A549 (cell line): ENCODE measurements at regions of chr5 and their contacts with region 1.

Region 1: DNA sequence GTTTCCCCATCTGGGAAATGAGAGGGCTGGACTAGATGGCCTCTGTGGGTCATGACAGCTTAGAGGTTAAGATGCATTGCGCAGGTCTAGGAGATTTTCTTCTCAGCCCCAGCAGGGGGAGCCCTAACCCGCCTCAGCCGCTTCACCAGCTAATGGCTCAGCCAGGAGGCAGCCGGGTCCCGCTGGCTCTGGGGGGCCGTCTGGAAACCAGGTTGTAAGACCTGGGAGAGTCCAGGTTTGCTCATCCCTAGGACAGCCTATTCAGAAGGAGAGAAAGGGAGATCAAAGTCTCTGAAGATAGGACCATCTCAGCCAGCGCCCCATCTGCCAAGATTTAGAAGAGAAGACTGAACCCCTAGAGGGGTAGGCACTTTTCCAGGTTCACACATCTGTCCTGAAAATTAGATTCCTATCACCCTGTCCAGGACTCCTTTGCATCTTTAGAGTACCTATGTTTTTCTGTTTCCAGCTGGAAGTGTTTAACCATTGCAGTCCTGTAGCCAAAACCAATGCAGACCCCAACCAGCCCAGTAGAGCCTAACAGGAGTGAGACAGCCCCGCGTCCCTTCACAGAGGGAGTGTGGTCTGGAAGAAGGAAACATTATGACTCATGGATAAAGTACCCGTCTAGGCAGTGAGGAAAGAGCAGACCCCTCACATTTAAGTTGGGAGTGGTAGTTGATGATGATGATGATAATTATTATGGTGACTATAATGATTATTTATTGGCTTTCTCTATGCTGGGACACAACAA is 27.5 kb downstream of the SPARC start:
- DNase-seq: peak; percentile 79 to 83
- ATAC-seq: peak; percentile 97 to 98
- H3K4me3 ChIP-seq: no peak overlapping the region
- H3K27ac ChIP-seq: peak overlapping the region; percentile 45 to 81; a peak in 5 of 6 replicates
- H3K4me1 ChIP-seq: peaks cover 5% of the 10 kb centered on the region; the same call in 1 of the 3 replicates
- CTCF ChIP-seq: peak; percentile 93
- EP300 ChIP-seq: no peak
- POLR2A ChIP-seq: no peak
- RAD21 ChIP-seq: peak; percentile 98

Region 2: GRCh38 chr5:151447174-151448037 is 211.8 kb before region 1 on chr5 and contains the start of gene SLC36A1:
- CTCF ChIA-PET with region 1: interaction called, 83 read pairs
- POLR2A ChIA-PET with region 1: no interaction called
- DNase-seq: peak; percentile 89 to 90
- ATAC-seq: peak; percentile 85 to 95
- H3K4me3 ChIP-seq: peak within 1 kb of the TSS; percentile 75
- H3K27ac ChIP-seq: peak within 1 kb of the TSS; percentile 72 to 89
- H3K4me1 ChIP-seq: peaks cover 16% of the 10 kb centered on the region
- CTCF ChIP-seq: peak; percentile 92
- EP300 ChIP-seq: no peak
- POLR2A ChIP-seq: peak; percentile 49; the same call in 1 of the 2 replicates
- RAD21 ChIP-seq: peak; percentile 74 to 86
- polyA plus RNA-seq, gene SLC36A1: 10.8 and 12.4 TPM in 2 replicates

Region 3: GRCh38 chr5:151675611-151676313 is 16.6 kb after region 1 on chr5:
- CTCF ChIA-PET with region 1: interaction called, 59 read pairs
- POLR2A ChIA-PET with region 1: no interaction called
- DNase-seq: no peak
- ATAC-seq: no peak
- H3K4me3 ChIP-seq: no peak overlapping the region
- H3K27ac ChIP-seq: peak overlapping the region in 1 of 2 experiments; percentile 11; a peak in 2 of 6 replicates
- H3K4me1 ChIP-seq: peaks cover 20% of the 10 kb centered on the region
- CTCF ChIP-seq: no peak
- EP300 ChIP-seq: no peak
- POLR2A ChIP-seq: no peak
- RAD21 ChIP-seq: no peak

Region 4: GRCh38 chr5:151699071-151699901 is 40.1 kb after region 1 on chr5:
- CTCF ChIA-PET with region 1: interaction called, 39 read pairs
- POLR2A ChIA-PET with region 1: interaction called, 5 read pairs
- DNase-seq: peak; percentile 61 to 77
- ATAC-seq: peak; percentile 93 to 95
- H3K4me3 ChIP-seq: no peak overlapping the region
- H3K27ac ChIP-seq: peak overlapping the region; percentile 71 to 93
- H3K4me1 ChIP-seq: peaks cover 48% of the 10 kb centered on the region
- CTCF ChIP-seq: no peak
- EP300 ChIP-seq: no peak
- POLR2A ChIP-seq: no peak
- RAD21 ChIP-seq: 0 out of 5 replicates have a peak, but pooled peaks of 1 of the 2 experiments have one; percentile 3

Region 5: DNA sequence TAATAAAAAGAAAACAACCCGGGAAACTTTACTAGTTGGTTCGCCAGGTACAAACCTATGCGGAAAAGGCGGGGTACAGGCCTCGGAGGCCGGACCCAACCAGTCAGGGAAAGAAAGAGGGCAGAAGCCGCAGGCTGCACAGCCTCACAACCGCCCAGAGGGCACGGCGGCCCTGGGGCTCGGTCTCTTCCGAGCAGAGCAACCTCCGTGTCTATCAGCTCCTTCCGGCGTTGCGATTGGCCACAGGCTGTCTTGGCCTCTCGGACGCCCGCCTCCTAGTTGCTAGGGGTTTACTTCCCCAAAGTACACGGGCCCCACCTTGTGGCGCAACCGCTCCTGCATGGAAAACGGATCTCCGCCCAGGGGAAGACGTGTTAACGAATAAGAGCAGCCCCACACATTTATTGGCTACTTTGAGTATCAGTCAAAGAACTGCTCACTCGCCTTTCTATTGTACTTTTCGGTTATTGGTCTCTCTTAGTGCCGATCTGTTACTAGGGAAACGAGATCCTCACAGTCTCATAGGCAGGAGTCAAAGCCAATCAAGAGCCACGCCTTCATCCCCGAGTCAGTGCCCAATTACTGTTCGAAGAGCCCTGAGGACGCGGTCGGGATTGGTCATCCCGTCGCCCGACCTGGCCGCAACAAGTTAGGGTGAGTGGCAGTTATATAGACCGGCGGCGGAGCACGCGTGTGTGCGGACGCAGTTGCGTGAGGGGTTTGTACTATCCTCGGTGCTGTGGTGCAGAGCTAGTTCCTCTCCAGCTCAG is 112.3 kb after region 1 on chr5 and contains the start of gene G3BP1:
- CTCF ChIA-PET with region 1: interaction called, 16 read pairs
- POLR2A ChIA-PET with region 1: interaction called, 6 read pairs
- DNase-seq: peak; percentile 99 to 100
- ATAC-seq: peak; percentile 87 to 94
- H3K4me3 ChIP-seq: peak within 1 kb of the TSS; percentile 87
- H3K27ac ChIP-seq: peak within 1 kb of the TSS; percentile 96 to 99
- H3K4me1 ChIP-seq: peaks cover 34% of the 10 kb centered on the region
- CTCF ChIP-seq: no peak; the same call in 2 of the 3 replicates
- EP300 ChIP-seq: no peak
- POLR2A ChIP-seq: peak; percentile 100
- RAD21 ChIP-seq: peak; percentile 51 to 55; a peak in 4 of 5 replicates
- polyA plus RNA-seq, gene G3BP1: 126 and 167 TPM in 2 replicates